H1 (cell line): ENCODE measurements at regions of chr3 and their contacts with region 1.

Region 1: DNA sequence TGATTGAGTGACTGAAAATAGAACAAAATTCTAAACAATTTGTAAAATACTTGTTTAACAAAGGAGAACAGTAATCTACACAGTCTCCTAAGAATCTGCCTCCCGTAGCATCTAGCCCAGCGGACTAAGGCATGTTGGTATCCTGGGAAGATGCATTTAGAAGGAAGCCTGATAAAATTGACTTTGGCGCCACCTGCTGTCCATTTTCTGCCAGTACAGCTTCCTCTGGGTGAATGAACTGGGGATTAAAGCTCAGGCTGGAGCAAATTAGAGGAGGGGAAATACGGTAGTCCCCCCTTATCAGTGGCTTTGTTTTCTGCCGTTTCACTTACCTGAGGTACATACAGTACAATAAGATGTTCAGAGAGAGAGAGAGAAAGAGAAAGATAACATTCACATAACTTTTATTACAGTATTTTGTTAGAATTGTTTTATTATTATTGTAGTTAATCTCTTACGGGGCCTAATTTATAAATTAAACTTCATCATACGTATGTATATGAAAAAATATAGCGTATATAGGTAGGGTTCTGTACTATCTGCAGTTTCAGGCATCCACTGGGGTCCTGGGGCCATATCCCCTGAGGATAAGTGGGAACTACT is 191.6 kb downstream of the GAP43 start:
- DNase-seq: peak; percentile 50 to 91
- H3K4me3 ChIP-seq: no peak overlapping the region
- H3K27ac ChIP-seq: no peak overlapping the region
- H3K4me1 ChIP-seq: peaks cover 0 to 5% (median 0%) of the 10 kb centered on the region in 4 experiments; a peak in 1 of 7 replicates
- H3K27me3 ChIP-seq: no peaks in the 10 kb centered on the region
- CTCF ChIP-seq: peak; percentile 37 to 89 (median 77)
- EP300 ChIP-seq: no peak
- POLR2A ChIP-seq: no peak
- RAD21 ChIP-seq: peak; percentile 89 to 94

Region 2: GRCh38 chr3:115562636-115563267 is 252.1 kb before region 1 on chr3:
- CTCF ChIA-PET with region 1: no interaction called
- POLR2A ChIA-PET with region 1: no interaction called
- DNase-seq: no peak
- H3K4me3 ChIP-seq: no peak overlapping the region
- H3K27ac ChIP-seq: no peak overlapping the region
- H3K4me1 ChIP-seq: no peaks in the 10 kb centered on the region
- H3K27me3 ChIP-seq: no peaks in the 10 kb centered on the region
- CTCF ChIP-seq: no peak
- EP300 ChIP-seq: no peak
- POLR2A ChIP-seq: no peak
- RAD21 ChIP-seq: no peak

Region 3: GRCh38 chr3:115800489-115801081 is 14.3 kb before region 1 on chr3:
- CTCF ChIA-PET with region 1: interaction called, 10 read pairs
- POLR2A ChIA-PET with region 1: no interaction called
- DNase-seq: no peak
- H3K4me3 ChIP-seq: no peak overlapping the region
- H3K27ac ChIP-seq: no peak overlapping the region
- H3K4me1 ChIP-seq: peaks cover 0 to 7% (median 0%) of the 10 kb centered on the region in 4 experiments; a peak in 3 of 7 replicates
- H3K27me3 ChIP-seq: no peaks in the 10 kb centered on the region
- CTCF ChIP-seq: no peak
- EP300 ChIP-seq: no peak
- POLR2A ChIP-seq: no peak
- RAD21 ChIP-seq: no peak